ENCODE measurements at regions of chr5 and their contacts with region 1.

Region 1: DNA sequence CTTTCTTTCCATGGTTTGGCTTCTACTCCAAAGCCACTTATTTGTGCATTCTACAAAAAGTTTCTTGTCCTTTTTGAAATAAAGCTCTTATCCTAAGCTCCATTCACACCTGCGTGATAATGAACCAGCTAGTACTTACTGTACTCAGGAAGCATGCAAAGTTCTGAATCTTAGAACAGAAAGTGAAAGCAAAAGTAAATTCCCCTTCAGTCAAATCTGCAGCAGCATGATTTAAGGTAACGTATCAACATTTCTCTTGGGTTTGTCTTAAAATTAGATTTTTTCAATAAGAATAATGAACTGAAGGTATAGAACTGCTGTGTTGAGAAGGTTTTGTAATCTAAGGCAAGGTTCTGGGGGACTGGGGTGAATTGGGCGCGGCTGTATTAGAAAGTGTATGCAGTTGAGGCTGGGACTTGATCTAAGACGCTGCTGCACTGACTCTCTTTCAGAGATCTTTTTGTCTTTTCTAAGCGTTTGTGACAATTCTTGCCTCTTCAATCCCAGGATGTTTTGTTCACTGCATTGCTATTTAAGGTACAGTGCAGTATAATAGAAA is at the start of gene ERAP2:
- DNase-seq: peak in 5 of 14 experiments; percentile 13 to 81 (median 75)
- ATAC-seq: peak; percentile 77
- H3K4me3 ChIP-seq: peak within 1 kb of the TSS; percentile 91
- H3K4me3 Mint-ChIP-seq: peak within 1 kb of the TSS; percentile 98
- H3K27ac ChIP-seq: peak within 1 kb of the TSS; percentile 83 to 90
- H3K27ac Mint-ChIP-seq: peak within 1 kb of the TSS; percentile 92
- H3K4me1 ChIP-seq: peaks cover 46% of the 10 kb centered on the region
- H3K4me1 Mint-ChIP-seq: peaks cover 81% of the 10 kb centered on the region
- H3K27me3 ChIP-seq: no peaks in the 10 kb centered on the region
- H3K27me3 Mint-ChIP-seq: no peaks in the 10 kb centered on the region
- CTCF ChIP-seq: no peak
- total RNA-seq, gene ERAP2: 56.6 to 61.4 TPM

Region 2: GRCh38 chr5:96624636-96625035 is 251.7 kb before region 1 on chr5:
- CTCF ChIA-PET with region 1: no interaction called
- POLR2A ChIA-PET with region 1: no interaction called
- intact Hi-C with region 1: no loop called
- DNase-seq: no peak
- ATAC-seq: no peak
- H3K4me3 ChIP-seq: no peak overlapping the region
- H3K4me3 Mint-ChIP-seq: no peak overlapping the region
- H3K27ac ChIP-seq: no peak overlapping the region
- H3K27ac Mint-ChIP-seq: no peak overlapping the region
- H3K4me1 ChIP-seq: no peaks in the 10 kb centered on the region
- H3K4me1 Mint-ChIP-seq: no peaks in the 10 kb centered on the region
- H3K27me3 ChIP-seq: no peaks in the 10 kb centered on the region
- H3K27me3 Mint-ChIP-seq: no peaks in the 10 kb centered on the region
- CTCF ChIP-seq: no peak

Region 3: GRCh38 chr5:96752341-96753016 is 123.9 kb before region 1 on chr5:
- CTCF ChIA-PET with region 1: no interaction called
- POLR2A ChIA-PET with region 1: no interaction called
- intact Hi-C with region 1: loop called (anchors 2 to 10 kb)
- DNase-seq: peak in 6 of 14 experiments; percentile 17 to 82 (median 68)
- ATAC-seq: peak; percentile 67
- H3K4me3 ChIP-seq: no peak overlapping the region
- H3K4me3 Mint-ChIP-seq: no peak overlapping the region
- H3K27ac ChIP-seq: no peak overlapping the region
- H3K27ac Mint-ChIP-seq: no peak overlapping the region
- H3K4me1 ChIP-seq: no peaks in the 10 kb centered on the region
- H3K4me1 Mint-ChIP-seq: no peaks in the 10 kb centered on the region
- H3K27me3 ChIP-seq: no peaks in the 10 kb centered on the region
- H3K27me3 Mint-ChIP-seq: no peaks in the 10 kb centered on the region
- CTCF ChIP-seq: peak; percentile 83

Region 4: GRCh38 chr5:96816411-96816939 is 59.9 kb before region 1 on chr5:
- CTCF ChIA-PET with region 1: no interaction called
- POLR2A ChIA-PET with region 1: interaction called, 14 read pairs
- intact Hi-C with region 1: no loop called
- DNase-seq: peak; percentile 21 to 92 (median 46)
- ATAC-seq: peak; percentile 86
- H3K4me3 ChIP-seq: peak overlapping the region; percentile 43
- H3K4me3 Mint-ChIP-seq: peak overlapping the region; percentile 67
- H3K27ac ChIP-seq: peak overlapping the region; percentile 68 to 76
- H3K27ac Mint-ChIP-seq: peak overlapping the region; percentile 92
- H3K4me1 ChIP-seq: peaks cover 35% of the 10 kb centered on the region
- H3K4me1 Mint-ChIP-seq: peaks cover 71% of the 10 kb centered on the region
- H3K27me3 ChIP-seq: no peaks in the 10 kb centered on the region
- H3K27me3 Mint-ChIP-seq: no peaks in the 10 kb centered on the region
- CTCF ChIP-seq: no peak

Region 5: GRCh38 chr5:96896806-96897205 is 20.4 kb after region 1 on chr5:
- CTCF ChIA-PET with region 1: interaction called, 7 read pairs
- POLR2A ChIA-PET with region 1: interaction called, 41 read pairs
- intact Hi-C with region 1: loop called in 1 of 2 experiments (anchors 1 kb)
- DNase-seq: peak in 3 of 14 experiments; percentile 41 to 52 (median 46)
- ATAC-seq: peak; percentile 32
- H3K4me3 ChIP-seq: peak overlapping the region; percentile 33
- H3K4me3 Mint-ChIP-seq: peak overlapping the region; percentile 83
- H3K27ac ChIP-seq: peak overlapping the region; percentile 78 to 79
- H3K27ac Mint-ChIP-seq: peak overlapping the region; percentile 91
- H3K4me1 ChIP-seq: peaks cover 8% of the 10 kb centered on the region
- H3K4me1 Mint-ChIP-seq: peaks cover 53% of the 10 kb centered on the region
- H3K27me3 ChIP-seq: no peaks in the 10 kb centered on the region
- H3K27me3 Mint-ChIP-seq: no peaks in the 10 kb centered on the region
- CTCF ChIP-seq: no peak

Region 6: DNA sequence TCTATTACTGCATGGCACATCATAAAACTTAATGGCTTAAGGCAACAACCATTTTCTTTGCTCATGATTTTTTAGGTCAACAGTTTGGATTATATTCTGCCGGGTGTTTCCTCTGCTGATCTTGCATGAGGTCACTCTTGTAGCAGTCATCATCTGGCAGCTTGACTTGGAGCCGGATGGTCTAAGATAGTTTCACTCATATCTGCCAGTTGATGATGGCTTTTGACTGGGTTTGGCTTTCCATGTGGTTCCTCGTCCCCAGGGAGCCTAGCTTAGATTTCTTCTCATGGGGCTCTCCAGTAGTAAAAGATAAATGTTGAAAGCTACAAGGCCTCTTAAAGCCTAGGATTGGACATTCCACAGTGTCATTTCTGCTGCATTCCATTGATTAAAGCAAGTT is 86.9 kb after region 1 on chr5:
- CTCF ChIA-PET with region 1: no interaction called
- POLR2A ChIA-PET with region 1: interaction called, 10 read pairs
- intact Hi-C with region 1: no loop called
- DNase-seq: peak in 4 of 14 experiments; percentile 32 to 54 (median 40)
- ATAC-seq: peak; percentile 32
- H3K4me3 ChIP-seq: no peak overlapping the region
- H3K4me3 Mint-ChIP-seq: peak overlapping the region; percentile 81
- H3K27ac ChIP-seq: peak overlapping the region; percentile 68 to 70
- H3K27ac Mint-ChIP-seq: peak overlapping the region; percentile 91
- H3K4me1 ChIP-seq: peaks cover 38% of the 10 kb centered on the region
- H3K4me1 Mint-ChIP-seq: peaks cover 94% of the 10 kb centered on the region
- H3K27me3 ChIP-seq: no peaks in the 10 kb centered on the region
- H3K27me3 Mint-ChIP-seq: no peaks in the 10 kb centered on the region
- CTCF ChIP-seq: no peak

Region 7: DNA sequence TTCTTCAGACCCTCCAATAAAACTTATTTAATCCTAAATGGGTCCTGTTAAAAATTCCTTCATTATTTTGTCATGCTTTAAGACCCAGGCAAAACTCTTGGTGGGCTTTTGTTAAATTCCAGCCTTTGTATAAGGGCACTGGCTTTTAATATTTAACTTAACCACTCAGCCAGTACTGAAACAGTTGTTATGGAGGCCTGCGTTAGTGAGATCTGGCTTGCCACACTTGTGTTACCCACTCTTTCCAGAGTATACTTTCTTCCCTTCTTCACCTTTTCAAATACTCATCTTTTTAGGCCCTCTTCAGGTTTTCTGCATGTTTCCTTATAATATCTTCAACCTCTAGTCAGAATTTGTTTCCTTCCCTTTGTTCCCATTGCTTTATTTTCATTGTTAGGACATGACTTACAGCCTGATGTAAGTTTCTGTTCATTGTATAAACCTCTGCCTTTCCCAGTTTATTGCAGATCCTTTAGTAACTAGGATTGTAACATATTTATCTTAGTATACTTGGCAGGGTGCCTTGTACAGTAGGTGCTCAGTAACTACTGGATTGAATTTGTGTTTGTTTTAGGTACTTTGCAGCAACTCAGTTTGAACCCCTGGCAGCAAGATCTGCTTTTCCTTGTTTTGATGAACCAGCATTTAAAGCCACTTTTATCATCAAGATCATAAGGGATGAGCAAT is 108.3 kb after region 1 on chr5:
- CTCF ChIA-PET with region 1: no interaction called
- POLR2A ChIA-PET with region 1: interaction called, 3 read pairs
- intact Hi-C with region 1: loop called (anchors 5 kb)
- DNase-seq: no peak
- ATAC-seq: no peak
- H3K4me3 ChIP-seq: no peak overlapping the region
- H3K4me3 Mint-ChIP-seq: no peak overlapping the region
- H3K27ac ChIP-seq: no peak overlapping the region
- H3K27ac Mint-ChIP-seq: no peak overlapping the region
- H3K4me1 ChIP-seq: peaks cover 3% of the 10 kb centered on the region
- H3K4me1 Mint-ChIP-seq: peaks cover 55% of the 10 kb centered on the region
- H3K27me3 ChIP-seq: no peaks in the 10 kb centered on the region
- H3K27me3 Mint-ChIP-seq: no peaks in the 10 kb centered on the region
- CTCF ChIP-seq: no peak

Measured in CD4-positive, alpha-beta T cell (primary cell).